ENCODE measurements at regions of chr1 and their contacts with region 1.

Region 1: GRCh38 chr1:53196485-53197270 is at the start of gene CPT2:
- DNase-seq: peak; percentile 90
- H3K4me3 ChIP-seq: peak within 1 kb of the TSS; percentile 83
- H3K4me3 Mint-ChIP-seq: peak within 1 kb of the TSS; percentile 99
- H3K27ac Mint-ChIP-seq: peak within 1 kb of the TSS; percentile 98
- H3K4me1 ChIP-seq: 0 out of 2 replicates have a peak, but pooled peaks cover 3% of the 10 kb centered on the region
- H3K4me1 Mint-ChIP-seq: peaks cover 21% of the 10 kb centered on the region
- H3K27me3 ChIP-seq: no peaks in the 10 kb centered on the region
- H3K27me3 Mint-ChIP-seq: no peaks in the 10 kb centered on the region
- CTCF ChIP-seq: no peak
- total RNA-seq, gene CPT2: 12.5 and 14.4 TPM in 2 replicates

Region 2: GRCh38 chr1:53047737-53048732 is 148.6 kb before region 1 on chr1:
- CTCF ChIA-PET with region 1: no interaction called
- POLR2A ChIA-PET with region 1: no interaction called
- intact Hi-C with region 1: no loop called
- DNase-seq: no peak
- H3K4me3 ChIP-seq: no peak overlapping the region
- H3K4me3 Mint-ChIP-seq: no peak overlapping the region
- H3K27ac Mint-ChIP-seq: no peak overlapping the region
- H3K4me1 ChIP-seq: no peaks in the 10 kb centered on the region
- H3K4me1 Mint-ChIP-seq: no peaks in the 10 kb centered on the region
- H3K27me3 ChIP-seq: no peaks in the 10 kb centered on the region
- H3K27me3 Mint-ChIP-seq: no peaks in the 10 kb centered on the region
- CTCF ChIP-seq: no peak

Region 3: GRCh38 chr1:53219711-53220110 is 23.0 kb after region 1 on chr1:
- CTCF ChIA-PET with region 1: no interaction called
- POLR2A ChIA-PET with region 1: no interaction called
- intact Hi-C with region 1: no loop called
- DNase-seq: no peak
- H3K4me3 ChIP-seq: peak overlapping the region; percentile 94
- H3K4me3 Mint-ChIP-seq: peak overlapping the region; percentile 89
- H3K27ac Mint-ChIP-seq: peak overlapping the region; percentile 96
- H3K4me1 ChIP-seq: no peaks in the 10 kb centered on the region
- H3K4me1 Mint-ChIP-seq: no peaks in the 10 kb centered on the region
- H3K27me3 ChIP-seq: no peaks in the 10 kb centered on the region
- H3K27me3 Mint-ChIP-seq: no peaks in the 10 kb centered on the region
- CTCF ChIP-seq: no peak

Region 4: GRCh38 chr1:53238197-53239155 is 41.8 kb after region 1 on chr1 and contains the start of gene MAGOH:
- CTCF ChIA-PET with region 1: no interaction called
- POLR2A ChIA-PET with region 1: no interaction called
- intact Hi-C with region 1: loop called (anchors 1 kb)
- DNase-seq: peak; percentile 95
- H3K4me3 ChIP-seq: peak within 1 kb of the TSS; percentile 63
- H3K4me3 Mint-ChIP-seq: peak within 1 kb of the TSS; percentile 90
- H3K27ac Mint-ChIP-seq: peak within 1 kb of the TSS; percentile 99
- H3K4me1 ChIP-seq: 0 out of 2 replicates have a peak, but pooled peaks cover 6% of the 10 kb centered on the region
- H3K4me1 Mint-ChIP-seq: peaks cover 16% of the 10 kb centered on the region
- H3K27me3 ChIP-seq: no peaks in the 10 kb centered on the region
- H3K27me3 Mint-ChIP-seq: peaks cover 5% of the 10 kb centered on the region
- CTCF ChIP-seq: no peak
- total RNA-seq, gene MAGOH: 74.2 and 77.0 TPM in 2 replicates

Region 5: DNA sequence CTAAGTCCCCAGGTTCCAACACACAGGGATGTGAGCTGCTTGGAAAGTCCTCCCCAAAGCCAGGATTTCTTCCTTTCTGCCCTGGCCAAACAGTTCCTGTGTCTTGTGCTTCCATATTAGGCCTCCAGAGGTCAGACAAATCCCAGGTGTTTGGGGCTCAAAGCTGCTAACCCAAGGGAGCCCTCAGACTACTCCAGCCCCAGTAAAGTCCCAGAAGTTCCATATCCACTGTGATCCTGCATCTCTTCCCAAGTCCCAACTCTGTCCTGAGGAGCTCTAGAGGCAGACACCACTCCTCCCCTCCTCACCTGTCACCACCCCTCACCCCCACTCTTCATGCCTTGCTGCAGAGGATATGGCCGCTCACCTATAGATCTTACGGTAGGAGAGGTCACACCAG is 69.4 kb after region 1 on chr1:
- CTCF ChIA-PET with region 1: no interaction called
- POLR2A ChIA-PET with region 1: no interaction called
- intact Hi-C with region 1: no loop called
- DNase-seq: no peak
- H3K4me3 ChIP-seq: no peak overlapping the region
- H3K4me3 Mint-ChIP-seq: no peak overlapping the region
- H3K27ac Mint-ChIP-seq: no peak overlapping the region
- H3K4me1 ChIP-seq: no peaks in the 10 kb centered on the region
- H3K4me1 Mint-ChIP-seq: no peaks in the 10 kb centered on the region
- H3K27me3 ChIP-seq: no peaks in the 10 kb centered on the region
- H3K27me3 Mint-ChIP-seq: no peaks in the 10 kb centered on the region
- CTCF ChIP-seq: peak in 1 of 2 experiments; percentile 35

Region 6: DNA sequence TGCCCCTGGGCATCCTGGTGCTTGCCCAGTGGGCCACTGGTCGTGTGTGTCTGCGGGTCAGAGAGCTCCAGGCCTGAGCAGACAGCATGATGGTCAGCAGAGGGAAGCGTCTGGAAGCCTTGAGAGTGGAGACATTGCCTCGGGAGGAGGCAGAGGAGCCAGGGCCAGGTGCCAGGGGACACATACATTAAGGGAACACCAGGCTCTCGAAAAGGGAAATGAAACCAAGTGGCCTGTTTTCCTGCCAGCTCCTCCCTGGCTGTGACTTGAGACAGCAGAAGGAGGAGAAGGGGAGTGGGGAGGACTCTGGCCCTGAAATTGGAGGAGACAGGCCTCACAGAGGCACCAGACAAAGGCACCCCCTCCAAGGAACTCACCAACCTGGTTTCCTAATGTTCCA is 193.6 kb after region 1 on chr1:
- CTCF ChIA-PET with region 1: no interaction called
- POLR2A ChIA-PET with region 1: no interaction called
- intact Hi-C with region 1: no loop called
- DNase-seq: no peak
- H3K4me3 ChIP-seq: no peak overlapping the region
- H3K4me3 Mint-ChIP-seq: no peak overlapping the region
- H3K27ac Mint-ChIP-seq: no peak overlapping the region
- H3K4me1 ChIP-seq: no peaks in the 10 kb centered on the region
- H3K4me1 Mint-ChIP-seq: no peaks in the 10 kb centered on the region
- H3K27me3 ChIP-seq: no peaks in the 10 kb centered on the region
- H3K27me3 Mint-ChIP-seq: peaks cover 3% of the 10 kb centered on the region
- CTCF ChIP-seq: no peak